ENCODE measurements at regions of chr1 and their contacts with region 1.

Region 1: DNA sequence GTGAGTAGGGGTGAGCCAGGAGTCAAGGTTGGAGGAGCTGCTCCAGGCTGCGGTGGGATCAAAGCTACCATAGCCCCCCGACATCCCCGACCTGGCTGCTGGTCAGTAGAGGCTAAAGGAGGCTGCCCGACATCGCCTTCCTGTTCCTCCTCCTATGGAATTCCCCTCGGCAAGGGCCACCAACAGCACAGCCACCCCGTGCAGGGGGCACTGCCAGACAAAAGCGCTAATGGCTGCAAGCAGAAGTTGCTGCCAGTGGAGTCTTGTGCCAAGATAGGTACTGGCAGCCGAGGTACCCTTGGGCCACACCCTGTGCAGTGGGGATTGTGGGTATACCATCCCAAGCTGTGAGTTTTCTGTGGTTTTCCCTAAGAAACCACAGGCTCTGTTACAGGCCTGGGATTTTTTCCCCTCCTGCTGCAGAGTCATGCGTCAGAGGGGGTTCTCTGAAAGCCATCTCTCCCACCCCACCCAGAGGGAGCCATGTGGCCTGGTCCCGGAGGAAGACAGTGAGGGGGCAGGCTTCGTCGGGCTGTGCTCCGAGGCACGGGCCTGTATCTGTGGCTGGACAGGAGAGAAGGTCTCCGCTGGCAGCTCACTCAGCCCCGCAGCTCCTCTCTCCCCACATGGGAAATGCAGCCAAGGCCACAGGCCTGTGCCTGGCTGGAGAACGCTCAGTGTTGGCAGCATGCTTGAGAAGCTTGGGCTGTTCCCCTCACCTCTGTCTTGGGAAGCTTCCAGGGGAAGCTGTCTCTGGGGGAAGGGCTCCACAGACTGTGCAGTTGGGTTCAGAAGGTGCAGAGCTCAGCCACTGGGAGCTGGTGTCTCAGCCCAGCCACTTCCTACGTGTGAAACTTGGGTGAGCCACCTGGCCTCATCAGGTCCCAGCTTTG is 42.5 kb downstream of the NEK2 start:
- DNase-seq: peak; percentile 61
- H3K4me3 ChIP-seq: no peak overlapping the region
- CTCF ChIP-seq: no peak

Region 2: GRCh38 chr1:211281320-211282022 is 351.4 kb before region 1 on chr1:
- CTCF ChIA-PET with region 1: no interaction called
- POLR2A ChIA-PET with region 1: no interaction called
- DNase-seq: no peak
- H3K4me3 ChIP-seq: no peak overlapping the region
- CTCF ChIP-seq: no peak

Region 3: GRCh38 chr1:211616232-211616979 is 16.5 kb before region 1 on chr1:
- CTCF ChIA-PET with region 1: interaction called, 16 read pairs
- POLR2A ChIA-PET with region 1: interaction called, 7 read pairs
- DNase-seq: no peak
- H3K4me3 ChIP-seq: no peak overlapping the region
- CTCF ChIP-seq: no peak

Region 4: GRCh38 chr1:211643324-211644212 is 10.7 kb after region 1 on chr1:
- CTCF ChIA-PET with region 1: interaction called, 16 read pairs
- POLR2A ChIA-PET with region 1: no interaction called
- DNase-seq: no peak
- H3K4me3 ChIP-seq: no peak overlapping the region
- CTCF ChIP-seq: no peak